HEK293T (cell line): ENCODE measurements at regions of chr16 and their contacts with region 1.

Region 1: GRCh38 chr16:278863-279366 is 1.5 kb upstream of the ARHGDIG start:
- DNase-seq: no peak

Region 2: GRCh38 chr16:234468-235305 is 44.2 kb before region 1 on chr16 and contains the start of gene FAM234A:
- CTCF ChIA-PET with region 1: no interaction called
- POLR2A ChIA-PET with region 1: interaction called, 11 read pairs
- DNase-seq: peak; percentile 95